K562 (cell line): ENCODE measurements at regions of chr6 and their contacts with region 1.

Region 1: GRCh38 chr6:157314705-157315321 is 8.5 kb downstream of the TMEM242 start:
- DNase-seq: peak; percentile 35 to 79 (median 58)
- ATAC-seq: peak; percentile 84
- H3K4me3 ChIP-seq: no peak overlapping the region
- H3K27ac ChIP-seq: no peak overlapping the region
- H3K4me1 ChIP-seq: peaks cover 21 to 24% of the 10 kb centered on the region in 2 experiments; a peak in 4 of 5 replicates
- H3K27me3 ChIP-seq: no peaks in the 10 kb centered on the region
- CTCF ChIP-seq: peak; percentile 92 to 100 (median 99)
- EP300 ChIP-seq: no peak
- POLR2A ChIP-seq: no peak
- RAD21 ChIP-seq: peak; percentile 100

Region 2: GRCh38 chr6:157133856-157134255 is 181.0 kb before region 1 on chr6:
- CTCF ChIA-PET with region 1: no interaction called
- POLR2A ChIA-PET with region 1: no interaction called
- in situ Hi-C with region 1: no loop called
- intact Hi-C with region 1: no loop called
- DNase-seq: no peak
- ATAC-seq: no peak
- H3K4me3 ChIP-seq: no peak overlapping the region
- H3K27ac ChIP-seq: no peak overlapping the region
- H3K4me1 ChIP-seq: peaks cover 0 to 3% of the 10 kb centered on the region in 2 experiments; a peak in 3 of 5 replicates
- H3K27me3 ChIP-seq: no peaks in the 10 kb centered on the region
- CTCF ChIP-seq: no peak
- EP300 ChIP-seq: no peak
- POLR2A ChIP-seq: no peak
- RAD21 ChIP-seq: no peak

Region 3: GRCh38 chr6:157379656-157380454 is 65.0 kb after region 1 on chr6:
- CTCF ChIA-PET with region 1: no interaction called
- POLR2A ChIA-PET with region 1: interaction called, 9 read pairs
- in situ Hi-C with region 1: no loop called
- intact Hi-C with region 1: loop called (anchors 2 kb)
- DNase-seq: peak; percentile 82 to 96 (median 86)
- ATAC-seq: peak; percentile 91
- H3K4me3 ChIP-seq: peak overlapping the region; percentile 77
- H3K27ac ChIP-seq: peak overlapping the region; percentile 75
- H3K4me1 ChIP-seq: peaks cover 21 to 29% of the 10 kb centered on the region in 2 experiments; a peak in 4 of 5 replicates
- H3K27me3 ChIP-seq: no peaks in the 10 kb centered on the region
- CTCF ChIP-seq: no peak; a peak in 1 of 6 replicates
- EP300 ChIP-seq: no peak
- POLR2A ChIP-seq: no peak
- RAD21 ChIP-seq: no peak; a peak in 1 of 4 replicates

Region 4: DNA sequence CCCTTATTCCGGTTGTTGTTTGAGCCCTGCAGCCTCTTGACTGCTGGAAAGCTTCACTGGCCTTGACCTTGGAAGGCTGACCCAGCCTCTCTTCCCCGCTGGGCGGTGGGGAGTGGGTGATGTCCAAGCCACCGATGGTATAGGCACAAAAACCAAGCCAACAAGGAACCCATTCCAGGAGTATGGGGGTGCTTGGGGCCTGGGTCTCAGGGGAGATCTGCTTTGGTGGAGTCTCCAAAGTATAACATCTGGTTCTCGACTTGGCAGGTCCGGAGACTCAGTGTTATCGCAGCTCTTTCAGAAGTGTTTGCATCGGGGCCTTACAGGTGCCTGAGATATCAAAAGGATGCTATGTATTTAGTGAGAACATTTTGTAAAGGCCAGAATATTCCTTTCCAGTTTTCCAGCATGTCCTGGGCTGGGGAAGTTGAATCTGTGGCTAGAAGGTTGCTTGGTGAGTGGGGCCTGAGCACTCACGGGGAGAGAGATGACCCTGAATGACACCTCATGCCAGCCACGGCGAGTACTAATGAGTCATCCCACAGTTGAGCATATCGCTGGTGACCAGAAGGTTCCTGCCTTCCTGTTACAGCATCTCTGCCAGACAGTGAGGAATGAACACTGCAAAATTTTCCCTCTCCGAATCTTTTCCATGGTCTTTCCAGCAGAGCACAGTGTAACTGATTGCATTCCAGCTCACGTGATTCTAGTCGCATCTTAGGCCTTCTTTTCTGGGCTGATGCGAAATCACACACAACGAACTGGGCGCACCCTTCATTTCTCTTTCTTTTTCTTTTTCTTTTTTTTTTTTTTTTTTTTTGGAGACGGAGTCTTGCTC is 200.1 kb after region 1 on chr6:
- CTCF ChIA-PET with region 1: no interaction called
- POLR2A ChIA-PET with region 1: interaction called, 3 read pairs
- in situ Hi-C with region 1: no loop called
- intact Hi-C with region 1: loop called (anchors 2 kb)
- DNase-seq: peak; percentile 94 to 97 (median 96)
- ATAC-seq: peak; percentile 83
- H3K4me3 ChIP-seq: peak overlapping the region; percentile 36
- H3K27ac ChIP-seq: peak overlapping the region; percentile 98
- H3K4me1 ChIP-seq: peaks cover 63 to 72% of the 10 kb centered on the region in 2 experiments
- H3K27me3 ChIP-seq: no peaks in the 10 kb centered on the region
- CTCF ChIP-seq: no peak; a peak in 1 of 6 replicates
- EP300 ChIP-seq: peak; percentile 99
- POLR2A ChIP-seq: peak; percentile 73
- RAD21 ChIP-seq: no peak; a peak in 2 of 4 replicates

Region 5: DNA sequence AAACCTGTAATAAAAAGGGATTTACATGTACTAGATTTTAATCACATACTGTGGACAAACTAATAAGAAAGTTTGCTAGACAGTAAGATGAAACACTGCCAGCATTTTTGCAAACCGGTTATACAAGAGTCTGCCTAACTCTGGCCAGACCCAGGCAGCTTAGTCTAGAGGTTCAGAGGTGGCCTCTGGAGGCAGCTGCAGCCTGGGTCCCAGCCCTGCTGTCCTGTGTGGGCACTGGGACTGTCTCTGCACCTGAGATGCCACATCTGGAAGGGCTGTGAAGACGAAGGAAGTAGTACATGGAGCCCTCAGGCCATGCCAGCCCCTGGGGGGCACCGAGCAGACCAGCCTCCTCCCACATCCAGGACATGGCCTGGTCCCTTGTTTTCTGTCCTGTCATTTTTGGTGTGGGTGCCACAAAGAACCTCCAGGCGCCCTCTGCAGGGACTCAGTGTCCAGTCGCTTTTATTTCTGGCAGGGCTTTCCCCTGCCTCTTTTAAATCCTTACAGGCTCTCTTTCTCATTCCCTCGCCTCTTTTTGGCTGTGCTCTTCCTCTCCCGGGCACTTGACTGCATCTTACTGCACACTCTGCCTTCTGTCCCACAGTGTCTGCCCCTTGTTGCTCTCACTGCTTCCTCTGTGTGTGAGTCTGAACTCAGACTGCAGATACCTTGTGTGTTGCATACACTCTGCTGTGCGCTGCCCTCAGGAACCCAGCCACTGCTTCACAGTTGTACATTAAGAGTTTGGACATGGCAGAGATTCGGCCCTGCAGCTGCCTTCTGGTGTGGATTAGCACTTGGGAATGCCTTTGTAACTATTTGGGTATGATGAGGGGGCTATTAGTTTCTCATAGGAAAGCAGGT is 282.9 kb after region 1 on chr6:
- CTCF ChIA-PET with region 1: interaction called, 47 read pairs
- POLR2A ChIA-PET with region 1: interaction called, 3 read pairs
- in situ Hi-C with region 1: no loop called
- intact Hi-C with region 1: loop called (anchors 1 kb)
- DNase-seq: peak in 2 of 4 experiments; percentile 63 to 67
- ATAC-seq: peak; percentile 94
- H3K4me3 ChIP-seq: no peak overlapping the region
- H3K27ac ChIP-seq: no peak overlapping the region
- H3K4me1 ChIP-seq: peaks cover 0 to 8% of the 10 kb centered on the region in 2 experiments; a peak in 2 of 5 replicates
- H3K27me3 ChIP-seq: no peaks in the 10 kb centered on the region
- CTCF ChIP-seq: peak; percentile 74 to 85 (median 78)
- EP300 ChIP-seq: no peak
- POLR2A ChIP-seq: no peak
- RAD21 ChIP-seq: peak; percentile 66 to 85

Region 6: GRCh38 chr6:157946865-157947532 is 632.2 kb after region 1 on chr6:
- CTCF ChIA-PET with region 1: interaction called, 3 read pairs
- POLR2A ChIA-PET with region 1: no interaction called
- in situ Hi-C with region 1: no loop called
- intact Hi-C with region 1: loop called (anchors 10 kb)
- DNase-seq: peak in 2 of 4 experiments; percentile 59 to 64
- ATAC-seq: peak; percentile 92
- H3K4me3 ChIP-seq: no peak overlapping the region
- H3K27ac ChIP-seq: no peak overlapping the region
- H3K4me1 ChIP-seq: peaks cover 0 to 6% of the 10 kb centered on the region in 2 experiments; a peak in 3 of 5 replicates
- H3K27me3 ChIP-seq: 0 out of 5 replicates have a peak, but pooled peaks cover 2 to 4% of the 10 kb centered on the region in 2 experiments
- CTCF ChIP-seq: peak; percentile 73 to 84 (median 78)
- EP300 ChIP-seq: no peak
- POLR2A ChIP-seq: peak; percentile 54
- RAD21 ChIP-seq: peak; percentile 80 to 90

Region 7: GRCh38 chr6:158131926-158132325 is 817.1 kb after region 1 on chr6:
- CTCF ChIA-PET with region 1: interaction called, 3 read pairs
- POLR2A ChIA-PET with region 1: no interaction called
- in situ Hi-C with region 1: no loop called
- intact Hi-C with region 1: loop called (anchors 10 kb)
- DNase-seq: peak; percentile 31 to 66 (median 54)
- ATAC-seq: peak; percentile 96
- H3K4me3 ChIP-seq: no peak overlapping the region
- H3K27ac ChIP-seq: no peak overlapping the region
- H3K4me1 ChIP-seq: no peaks in the 10 kb centered on the region
- H3K27me3 ChIP-seq: no peaks in the 10 kb centered on the region; a peak in 1 of 5 replicates
- CTCF ChIP-seq: peak; percentile 69 to 86 (median 75)
- EP300 ChIP-seq: no peak
- POLR2A ChIP-seq: no peak
- RAD21 ChIP-seq: peak; percentile 67 to 83

Region 8: GRCh38 chr6:158253248-158253647 is 938.4 kb after region 1 on chr6:
- CTCF ChIA-PET with region 1: no interaction called
- POLR2A ChIA-PET with region 1: no interaction called
- in situ Hi-C with region 1: no loop called
- intact Hi-C with region 1: no loop called
- DNase-seq: no peak
- ATAC-seq: no peak
- H3K4me3 ChIP-seq: no peak overlapping the region
- H3K27ac ChIP-seq: no peak overlapping the region
- H3K4me1 ChIP-seq: peaks cover 0 to 12% of the 10 kb centered on the region in 2 experiments; a peak in 3 of 5 replicates
- H3K27me3 ChIP-seq: no peaks in the 10 kb centered on the region
- CTCF ChIP-seq: no peak
- EP300 ChIP-seq: no peak
- POLR2A ChIP-seq: no peak
- RAD21 ChIP-seq: no peak